AG04450 (cell line): ENCODE measurements at regions of chr5 and their contacts with region 1.

Region 1: GRCh38 chr5:132963175-132964104 is at the start of gene AFF4:
- DNase-seq: peak; percentile 80
- H3K4me3 ChIP-seq: peak within 1 kb of the TSS; percentile 85
- H3K27ac ChIP-seq: peak within 1 kb of the TSS; percentile 93
- H3K27me3 ChIP-seq: no peaks in the 10 kb centered on the region
- CTCF ChIP-seq: no peak
- polyA plus RNA-seq, gene AFF4: 57.6 and 62.3 TPM in 2 replicates

Region 2: DNA sequence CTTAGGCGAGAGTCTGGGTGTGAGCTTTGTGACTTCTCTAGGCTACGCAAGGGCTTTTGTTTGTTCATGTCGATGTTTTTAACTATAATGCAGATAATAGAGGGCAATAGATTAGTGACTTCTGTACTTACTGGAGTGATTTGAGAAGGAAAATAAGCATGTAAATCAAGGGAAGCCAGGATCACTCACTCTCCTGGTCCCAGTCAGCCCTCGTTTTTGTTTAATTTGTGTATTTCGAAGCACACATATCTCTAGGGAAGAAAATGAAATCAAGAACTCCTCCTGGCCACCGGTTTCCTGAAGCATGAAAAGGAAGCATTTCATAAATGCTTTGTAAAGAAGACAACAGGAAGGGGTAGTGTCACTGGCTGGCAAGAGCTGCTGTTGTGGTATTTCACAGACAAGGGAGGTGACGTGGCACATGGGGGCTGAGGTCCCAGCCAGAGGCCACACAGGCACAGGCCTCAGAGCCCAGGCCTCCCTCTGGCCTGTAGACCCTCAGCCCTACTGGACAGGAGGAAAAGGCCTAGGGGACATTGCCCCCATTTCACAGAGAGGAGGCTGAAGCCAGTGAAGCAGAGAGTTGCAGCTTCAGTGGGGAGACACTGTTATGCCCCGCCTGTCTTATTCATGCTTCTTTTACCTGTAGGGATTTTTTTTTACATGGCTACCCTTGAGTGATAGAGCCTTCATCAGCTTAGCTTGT is 507.0 kb before region 1 on chr5:
- CTCF ChIA-PET with region 1: no interaction called
- POLR2A ChIA-PET with region 1: no interaction called
- DNase-seq: no peak
- H3K4me3 ChIP-seq: no peak overlapping the region
- H3K27ac ChIP-seq: peak overlapping the region; percentile 90
- H3K27me3 ChIP-seq: no peaks in the 10 kb centered on the region
- CTCF ChIP-seq: no peak

Region 3: GRCh38 chr5:132947671-132948070 is 15.8 kb before region 1 on chr5:
- CTCF ChIA-PET with region 1: no interaction called
- POLR2A ChIA-PET with region 1: interaction called, 11 read pairs
- DNase-seq: peak; percentile 6
- H3K4me3 ChIP-seq: no peak overlapping the region
- H3K27ac ChIP-seq: no peak overlapping the region
- H3K27me3 ChIP-seq: no peaks in the 10 kb centered on the region
- CTCF ChIP-seq: no peak

Region 4: GRCh38 chr5:133051580-133052332 is 88.3 kb after region 1 on chr5 and contains the start of gene HSPA4:
- CTCF ChIA-PET with region 1: no interaction called
- POLR2A ChIA-PET with region 1: interaction called, 27 read pairs
- DNase-seq: peak; percentile 98
- H3K4me3 ChIP-seq: peak within 1 kb of the TSS; percentile 96
- H3K27ac ChIP-seq: peak within 1 kb of the TSS; percentile 99
- H3K27me3 ChIP-seq: no peaks in the 10 kb centered on the region
- CTCF ChIP-seq: no peak
- polyA plus RNA-seq, gene HSPA4: 63.8 and 96.9 TPM in 2 replicates